ENCODE measurements at regions of chr10 and their contacts with region 1.

Region 1: DNA sequence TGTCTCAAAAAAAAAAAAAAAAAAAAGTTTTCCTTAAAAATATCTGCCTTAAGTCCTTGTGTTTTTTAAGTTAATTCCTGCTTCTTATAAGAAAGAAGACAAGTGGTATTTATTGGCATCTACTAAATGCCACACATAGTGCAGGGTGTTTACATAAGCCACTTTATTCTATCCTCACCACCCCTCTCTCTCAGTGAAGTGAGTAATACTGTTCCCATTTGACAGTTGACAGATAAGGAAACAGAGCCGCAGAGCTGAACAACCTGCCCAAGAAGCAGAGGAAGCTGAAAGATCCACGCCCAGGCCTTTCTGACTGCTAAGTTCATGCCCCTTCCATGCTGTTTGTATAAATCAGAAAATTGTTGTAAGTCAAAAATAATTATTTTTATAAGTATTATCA is 54.1 kb downstream of the ABLIM1 start:
- DNase-seq: peak in 1 of 2 experiments; percentile 81
- H3K4me3 ChIP-seq: no peak overlapping the region
- H3K27ac ChIP-seq: no peak overlapping the region
- H3K4me1 ChIP-seq: peaks cover 28% of the 10 kb centered on the region
- H3K27me3 ChIP-seq: no peaks in the 10 kb centered on the region
- CTCF ChIP-seq: no peak

Region 2: GRCh38 chr10:113135025-113135424 is 1468.9 kb before region 1 on chr10:
- CTCF ChIA-PET with region 1: no interaction called
- POLR2A ChIA-PET with region 1: interaction called, 13 read pairs
- intact Hi-C with region 1: no loop called
- DNase-seq: no peak
- H3K4me3 ChIP-seq: no peak overlapping the region
- H3K27ac ChIP-seq: no peak overlapping the region
- H3K4me1 ChIP-seq: peaks cover 14% of the 10 kb centered on the region
- H3K27me3 ChIP-seq: no peaks in the 10 kb centered on the region
- CTCF ChIP-seq: no peak

Region 3: GRCh38 chr10:114561008-114561532 is 42.9 kb before region 1 on chr10:
- CTCF ChIA-PET with region 1: no interaction called
- POLR2A ChIA-PET with region 1: no interaction called
- intact Hi-C with region 1: loop called (anchors 5 kb)
- DNase-seq: no peak
- H3K4me3 ChIP-seq: no peak overlapping the region
- H3K27ac ChIP-seq: no peak overlapping the region
- H3K4me1 ChIP-seq: no peaks in the 10 kb centered on the region
- H3K27me3 ChIP-seq: no peaks in the 10 kb centered on the region
- CTCF ChIP-seq: no peak

Region 4: GRCh38 chr10:114631666-114632417 is 27.9 kb after region 1 on chr10:
- CTCF ChIA-PET with region 1: no interaction called
- POLR2A ChIA-PET with region 1: no interaction called
- intact Hi-C with region 1: no loop called
- DNase-seq: peak; percentile 49 to 50
- H3K4me3 ChIP-seq: peak overlapping the region; percentile 54
- H3K27ac ChIP-seq: no peak overlapping the region
- H3K4me1 ChIP-seq: peaks cover 81% of the 10 kb centered on the region
- H3K27me3 ChIP-seq: no peaks in the 10 kb centered on the region
- CTCF ChIP-seq: no peak

Measured in PC-9 (cell line).